Upper lobe of right lung (tissue), 1 donor: ENCODE measurements at regions of chr9 and their contacts with region 1.

Region 1: DNA sequence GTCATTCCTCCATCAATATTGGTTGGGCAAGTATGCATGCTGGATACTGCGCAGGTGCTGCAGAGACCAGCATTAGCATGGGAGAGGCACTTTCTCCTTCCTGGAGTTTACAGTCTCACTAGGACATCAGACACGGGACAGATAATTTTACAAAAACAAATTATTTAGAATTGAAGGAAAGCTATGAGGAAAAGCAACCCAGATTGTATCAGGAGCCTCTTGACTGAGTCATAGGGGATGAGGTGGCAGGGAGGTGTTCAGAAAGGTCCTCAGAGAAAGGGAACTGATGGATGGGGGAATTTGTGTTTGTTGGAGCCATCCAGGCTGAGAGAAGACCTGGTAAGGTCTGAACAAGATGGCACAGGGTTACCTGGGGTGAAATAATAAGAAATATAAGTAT is 24.5 kb upstream of the RAB14 start:
- DNase-seq: no peak
- ATAC-seq: no peak
- H3K4me3 ChIP-seq: no peak overlapping the region
- H3K27ac ChIP-seq: no peak overlapping the region
- H3K4me1 ChIP-seq: peaks cover 5% of the 10 kb centered on the region
- H3K27me3 ChIP-seq: no peaks in the 10 kb centered on the region
- CTCF ChIP-seq: no peak

Region 2: DNA sequence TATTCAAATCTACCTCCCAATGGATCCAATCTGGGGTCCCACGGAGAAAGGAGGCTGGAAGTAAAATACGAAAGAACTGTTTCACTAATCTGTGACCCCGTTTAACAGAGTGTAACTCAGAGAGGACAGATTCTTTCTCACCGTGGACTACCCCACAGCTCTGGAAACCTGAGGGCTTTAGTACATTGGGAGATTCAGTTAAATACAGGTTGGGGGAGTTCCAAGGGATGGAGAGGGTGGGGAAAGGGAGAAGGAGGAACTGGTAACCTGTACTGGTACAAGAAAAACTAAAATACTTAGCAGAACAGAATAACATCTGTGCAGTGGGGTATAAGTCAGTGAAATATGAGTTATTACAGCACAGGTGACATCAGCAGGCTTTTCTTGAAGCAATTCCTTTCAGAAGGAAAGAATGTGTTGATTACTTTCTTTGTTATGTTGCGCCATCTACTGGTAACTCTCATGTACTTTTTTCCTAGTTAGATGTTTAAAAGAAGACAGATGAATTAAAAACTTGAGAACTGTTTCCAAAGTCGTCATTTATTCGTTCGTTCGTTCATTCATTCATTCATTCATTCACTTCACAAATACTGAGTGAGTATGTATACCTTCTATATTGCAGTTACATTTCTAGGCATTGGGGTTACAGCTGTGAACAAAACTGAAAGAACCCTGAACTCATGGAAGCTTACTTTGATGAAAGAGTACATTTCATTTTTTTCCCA is 173.9 kb after region 1 on chr9:
- intact Hi-C with region 1: loop called (anchors 5 kb)
- DNase-seq: no peak
- ATAC-seq: peak; percentile 87
- H3K4me3 ChIP-seq: no peak overlapping the region
- H3K27ac ChIP-seq: no peak overlapping the region
- H3K4me1 ChIP-seq: no peaks in the 10 kb centered on the region
- H3K27me3 ChIP-seq: no peaks in the 10 kb centered on the region
- CTCF ChIP-seq: peak; percentile 70